Colonic mucosa (tissue), 4 donors: ENCODE measurements at regions of chr17 and their contacts with region 1.

Region 1: DNA sequence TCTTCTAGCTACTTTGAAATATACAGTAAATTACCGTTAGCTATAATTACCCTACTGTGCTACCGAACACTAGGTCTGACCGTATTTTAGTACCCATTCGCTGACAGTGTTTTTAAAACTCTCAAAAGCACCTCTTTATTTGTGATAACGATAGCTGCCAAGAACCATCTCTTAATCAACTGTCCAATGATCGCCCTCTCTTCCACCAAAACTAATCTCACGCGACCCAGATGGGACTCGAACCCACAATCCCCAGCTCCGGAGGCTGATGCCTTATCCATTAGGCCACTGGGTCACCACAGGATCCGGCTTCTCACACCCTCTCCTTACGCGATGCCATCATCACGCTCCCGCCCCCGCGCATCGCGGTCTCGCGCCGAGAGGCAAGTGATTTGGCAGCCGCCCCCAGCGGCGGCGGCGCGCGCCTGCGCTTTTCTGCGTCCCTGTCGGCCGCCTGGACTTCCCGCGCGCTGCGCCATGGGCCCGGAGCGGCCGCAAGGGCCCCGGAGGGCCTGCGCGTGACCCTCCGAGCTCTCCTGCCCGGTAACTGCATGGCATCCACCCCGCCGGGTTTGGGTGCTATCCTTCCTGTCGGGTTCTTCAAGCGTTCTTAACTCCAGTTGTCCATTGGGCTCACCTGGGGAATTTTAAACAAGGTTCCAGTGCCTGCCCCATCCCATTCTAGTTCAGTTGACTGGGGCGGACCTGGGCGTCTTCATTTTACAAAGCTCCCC is 15.7 kb upstream of the KPNA2 start:
- DNase-seq: peak; percentile 98
- H3K4me3 ChIP-seq: peak overlapping the region; percentile 62
- H3K27ac ChIP-seq: peak overlapping the region; percentile 84
- H3K4me1 ChIP-seq: no peaks in the 10 kb centered on the region
- H3K27me3 ChIP-seq: no peaks in the 10 kb centered on the region
- CTCF ChIP-seq: peak; percentile 42

Region 2: DNA sequence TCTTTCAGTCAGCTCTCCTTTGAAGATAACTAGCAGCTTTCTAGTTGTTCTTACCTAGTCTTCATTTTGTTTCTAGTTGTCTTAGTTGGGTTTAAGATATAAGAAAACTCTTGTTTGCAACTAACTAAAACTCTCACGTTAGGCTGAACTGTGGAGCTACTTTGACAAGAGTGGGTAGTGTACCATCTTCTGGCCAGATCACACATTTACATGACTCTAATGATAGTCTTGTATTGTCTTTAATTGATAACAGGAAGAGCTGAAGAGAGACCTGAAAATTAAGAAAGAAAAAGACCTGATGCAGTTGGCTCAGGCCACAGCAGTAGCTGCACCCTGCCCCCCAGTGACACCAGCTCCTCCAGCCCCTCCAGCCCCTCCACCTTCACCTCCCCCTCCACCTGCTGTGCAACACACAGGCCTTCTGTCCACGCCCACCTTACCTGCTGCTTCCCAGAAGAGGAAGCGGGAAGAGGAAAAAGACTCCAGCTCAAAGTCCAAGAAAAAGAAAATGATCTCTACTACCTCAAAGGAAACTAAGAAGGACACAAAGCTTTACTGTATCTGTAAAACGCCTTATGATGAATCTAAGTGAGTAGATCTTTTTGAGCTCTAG is 60.4 kb before region 1 on chr17:
- intact Hi-C with region 1: loop called (anchors 10 kb)
- DNase-seq: peak; percentile 56
- H3K4me3 ChIP-seq: no peak overlapping the region
- H3K27ac ChIP-seq: peak overlapping the region; percentile 26
- H3K4me1 ChIP-seq: no peaks in the 10 kb centered on the region
- H3K27me3 ChIP-seq: no peaks in the 10 kb centered on the region
- CTCF ChIP-seq: no peak